Activated T-helper 2 cell treated with anti-CD3 and anti-CD28 coated beads, Interferon-gamma antibody, Interleukin-2, Interleukin-4, amounts not matched to agents 10 μg/mL and 5 μg/mL and 100 μg/mL, durations not matched to agents 14 hours and 24 hours and 36 hours (primary cell): ENCODE measurements at regions of chr13 and their contacts with region 1.

Region 1: DNA sequence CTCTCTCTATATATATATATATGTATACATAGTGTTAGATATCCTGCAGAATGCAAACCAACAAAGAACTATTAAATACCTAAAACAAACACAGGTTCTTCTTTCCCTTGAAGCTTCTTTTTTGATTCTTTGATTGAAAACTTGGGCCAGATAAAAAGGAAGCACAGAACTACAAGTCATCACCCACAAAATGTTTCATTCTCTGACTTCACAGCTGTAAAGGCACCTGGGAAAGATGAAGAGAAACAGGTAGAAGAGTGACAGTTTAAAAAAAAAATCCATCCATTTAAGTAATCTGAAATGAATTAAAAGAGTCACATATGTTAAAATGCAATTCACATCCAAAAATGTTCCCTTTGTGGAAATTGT is 90.7 kb upstream of the FNDC3A start:
- DNase-seq: no peak
- H3K4me3 Mint-ChIP-seq: no peak overlapping the region
- H3K27ac Mint-ChIP-seq: no peak overlapping the region
- H3K4me1 Mint-ChIP-seq: peaks cover 38% of the 10 kb centered on the region
- H3K27me3 Mint-ChIP-seq: no peaks in the 10 kb centered on the region

Region 2: GRCh38 chr13:48749699-48750473 is 135.1 kb before region 1 on chr13:
- intact Hi-C with region 1: loop called (anchors 2 kb)
- DNase-seq: peak; percentile 46
- H3K4me3 Mint-ChIP-seq: no peak overlapping the region
- H3K27ac Mint-ChIP-seq: peak overlapping the region; percentile 70
- H3K4me1 Mint-ChIP-seq: peaks cover 13% of the 10 kb centered on the region
- H3K27me3 Mint-ChIP-seq: peaks cover 2% of the 10 kb centered on the region

Region 3: GRCh38 chr13:48804821-48805601 is 80.0 kb before region 1 on chr13:
- intact Hi-C with region 1: loop called (anchors 2 kb)
- DNase-seq: no peak
- H3K4me3 Mint-ChIP-seq: peak overlapping the region; percentile 15
- H3K27ac Mint-ChIP-seq: peak overlapping the region; percentile 63
- H3K4me1 Mint-ChIP-seq: peaks cover 25% of the 10 kb centered on the region
- H3K27me3 Mint-ChIP-seq: peaks cover 14% of the 10 kb centered on the region

Region 4: GRCh38 chr13:48828962-48829421 is 56.0 kb before region 1 on chr13:
- intact Hi-C with region 1: no loop called
- DNase-seq: no peak
- H3K4me3 Mint-ChIP-seq: no peak overlapping the region
- H3K27ac Mint-ChIP-seq: no peak overlapping the region
- H3K4me1 Mint-ChIP-seq: peaks cover 14% of the 10 kb centered on the region
- H3K27me3 Mint-ChIP-seq: peaks cover 5% of the 10 kb centered on the region

Region 5: DNA sequence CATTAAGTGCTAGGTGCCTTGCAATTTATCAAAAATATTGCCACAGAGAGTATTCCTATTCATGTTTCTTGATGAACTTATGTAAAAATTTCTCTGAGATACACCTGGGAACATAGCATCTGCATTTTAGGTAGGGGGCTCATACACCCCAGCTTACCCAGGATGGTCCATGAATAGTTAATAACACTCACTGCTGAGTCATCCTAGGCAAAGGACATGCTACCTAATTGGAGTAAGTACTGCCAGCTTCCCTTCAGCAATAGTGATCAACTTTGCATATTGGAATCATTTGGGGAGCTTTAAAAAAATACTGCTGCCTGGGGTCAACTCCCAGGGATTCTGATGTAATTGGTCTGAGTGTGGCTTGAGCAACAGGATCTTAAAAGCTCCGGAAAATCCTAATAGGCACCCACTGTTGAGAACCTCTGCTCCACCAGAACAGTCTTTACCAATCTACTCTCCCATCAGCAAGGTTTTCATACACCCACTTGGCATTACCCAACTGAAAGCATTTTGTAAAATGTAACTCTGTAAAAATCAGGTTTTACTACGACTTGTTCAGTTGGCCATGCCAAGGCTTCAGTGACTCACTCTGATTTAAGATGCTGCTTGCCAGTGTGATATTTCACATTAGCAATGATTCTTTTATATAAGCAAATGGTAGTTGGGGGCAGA is 23.5 kb after region 1 on chr13:
- intact Hi-C with region 1: no loop called
- DNase-seq: no peak
- H3K4me3 Mint-ChIP-seq: no peak overlapping the region
- H3K27ac Mint-ChIP-seq: no peak overlapping the region
- H3K4me1 Mint-ChIP-seq: no peaks in the 10 kb centered on the region
- H3K27me3 Mint-ChIP-seq: peaks cover 11% of the 10 kb centered on the region